ENCODE measurements at regions of chr12 and their contacts with region 1.

Region 1: DNA sequence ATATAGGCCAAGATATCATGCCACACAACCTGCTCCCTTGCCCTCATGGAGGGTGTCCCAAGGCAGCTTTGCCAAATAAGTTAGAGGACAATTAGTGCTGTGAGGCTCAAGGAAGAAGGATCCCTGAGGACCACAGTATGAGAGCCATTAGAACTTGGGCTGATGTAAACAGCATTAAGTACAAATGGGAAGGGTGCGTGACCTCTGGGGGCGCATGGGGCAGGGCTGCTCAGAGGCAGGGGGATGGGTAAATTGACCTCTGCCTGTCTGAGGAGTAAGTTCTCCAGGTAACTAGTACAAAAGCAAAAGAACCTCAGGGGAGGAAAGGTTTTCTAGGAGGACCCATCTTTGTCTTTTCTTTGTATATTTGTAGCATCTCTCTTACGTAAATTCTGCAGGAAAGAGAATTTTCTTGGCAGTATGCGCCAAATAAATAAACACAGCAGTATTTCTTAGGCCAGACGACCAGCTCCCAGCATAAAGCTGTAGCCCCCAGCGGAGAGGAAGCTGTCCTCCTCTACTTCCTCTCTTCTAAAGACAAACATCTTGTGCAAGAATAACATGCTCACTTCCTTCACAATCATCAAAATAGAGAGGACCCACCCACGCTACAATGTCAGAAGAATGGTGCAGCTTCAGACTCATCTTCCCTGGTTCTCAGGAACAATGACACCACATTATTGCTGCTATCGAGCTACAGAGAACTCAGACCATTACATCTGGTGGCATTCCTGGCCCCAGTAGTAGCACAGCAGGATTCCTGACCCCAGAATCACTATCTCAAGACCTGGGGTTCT is 16.4 kb upstream of the VWF start:
- H3K4me3 Mint-ChIP-seq: peak overlapping the region; percentile 58
- H3K27ac Mint-ChIP-seq: peak overlapping the region; percentile 94
- H3K4me1 Mint-ChIP-seq: peaks cover 75% of the 10 kb centered on the region
- H3K27me3 Mint-ChIP-seq: peaks cover 3% of the 10 kb centered on the region

Region 2: GRCh38 chr12:6167327-6168259 is 26.7 kb after region 1 on chr12:
- intact Hi-C with region 1: loop called (anchors 1 kb)
- H3K4me3 Mint-ChIP-seq: peak overlapping the region; percentile 39
- H3K27ac Mint-ChIP-seq: peak overlapping the region; percentile 91
- H3K4me1 Mint-ChIP-seq: peaks cover 60% of the 10 kb centered on the region
- H3K27me3 Mint-ChIP-seq: no peaks in the 10 kb centered on the region

Region 3: GRCh38 chr12:6182116-6182898 is 41.5 kb after region 1 on chr12:
- intact Hi-C with region 1: loop called (anchors 5 kb)
- H3K4me3 Mint-ChIP-seq: peak overlapping the region; percentile 37
- H3K27ac Mint-ChIP-seq: no peak overlapping the region
- H3K4me1 Mint-ChIP-seq: peaks cover 4% of the 10 kb centered on the region
- H3K27me3 Mint-ChIP-seq: no peaks in the 10 kb centered on the region

Measured in dendritic cell treated with granulocyte-macrophage colony-stimulating factor and Interleukin-4, amounts not matched to agents 40 ng/mL and 50 ng/mL, for 4 days (primary cell).